ENCODE measurements at regions of chr9 and their contacts with region 1.

Region 1: GRCh38 chr9:127586537-127586936 is 25.5 kb upstream of the STXBP1 start:
- DNase-seq: peak; percentile 84
- ATAC-seq: peak; percentile 92

Region 2: DNA sequence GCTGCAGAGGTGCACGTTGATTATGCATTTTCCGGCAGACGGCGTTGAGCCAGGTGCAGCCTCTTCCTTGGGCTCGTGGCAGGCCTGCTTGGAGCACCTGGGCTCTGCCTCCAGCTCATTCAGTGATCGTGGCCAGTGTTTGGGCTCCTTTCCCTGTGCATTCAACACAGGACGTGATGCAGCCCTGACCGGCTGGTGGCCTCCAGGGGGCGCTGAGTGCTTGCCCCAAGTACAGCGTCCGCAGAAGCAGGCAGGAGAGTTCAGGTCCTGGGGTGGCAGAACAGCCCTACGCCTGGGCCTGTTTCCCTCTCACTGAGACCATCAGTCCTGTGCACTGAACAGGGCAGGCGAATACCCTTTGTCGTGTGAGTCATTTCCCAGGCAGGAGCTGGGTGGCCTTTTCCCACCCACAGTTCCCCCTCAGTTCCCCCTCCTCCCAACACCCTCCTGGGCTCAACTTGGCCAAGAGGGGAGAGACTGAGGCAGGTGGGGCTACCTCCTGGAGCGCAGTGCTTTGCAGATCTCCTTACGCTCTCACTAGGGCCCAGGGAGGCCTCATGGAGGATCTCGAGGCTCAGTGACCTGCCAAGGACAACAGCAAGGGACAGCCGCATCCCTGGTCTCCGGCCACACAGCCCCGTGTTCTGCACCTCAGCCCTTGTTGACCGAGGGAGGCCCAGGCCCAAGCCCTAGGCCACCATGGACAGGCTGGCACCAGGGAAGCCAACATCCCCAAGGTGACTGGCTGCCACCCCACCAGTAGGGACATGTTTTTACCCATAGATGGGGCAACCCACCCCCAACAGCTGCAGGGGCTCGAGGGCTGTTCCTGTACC is 82.4 kb before region 1 on chr9:
- intact Hi-C with region 1: loop called (anchors 1 kb)
- DNase-seq: peak; percentile 92
- ATAC-seq: peak; percentile 80

Region 3: GRCh38 chr9:127785023-127785932 is 198.7 kb after region 1 on chr9:
- intact Hi-C with region 1: loop called (anchors 2 kb)
- DNase-seq: peak; percentile 95
- ATAC-seq: peak; percentile 70

Measured in Right ventricle myocardium inferior (tissue), 1 donor.